ENCODE measurements at regions of chr10 and their contacts with region 1.

Region 1: GRCh38 chr10:69890065-69890847 is 88.5 kb downstream of the COL13A1 start:
- H3K4me3 ChIP-seq: no peak overlapping the region
- H3K27ac ChIP-seq: no peak overlapping the region
- H3K4me1 ChIP-seq: no peaks in the 10 kb centered on the region
- CTCF ChIP-seq: no peak

Region 2: DNA sequence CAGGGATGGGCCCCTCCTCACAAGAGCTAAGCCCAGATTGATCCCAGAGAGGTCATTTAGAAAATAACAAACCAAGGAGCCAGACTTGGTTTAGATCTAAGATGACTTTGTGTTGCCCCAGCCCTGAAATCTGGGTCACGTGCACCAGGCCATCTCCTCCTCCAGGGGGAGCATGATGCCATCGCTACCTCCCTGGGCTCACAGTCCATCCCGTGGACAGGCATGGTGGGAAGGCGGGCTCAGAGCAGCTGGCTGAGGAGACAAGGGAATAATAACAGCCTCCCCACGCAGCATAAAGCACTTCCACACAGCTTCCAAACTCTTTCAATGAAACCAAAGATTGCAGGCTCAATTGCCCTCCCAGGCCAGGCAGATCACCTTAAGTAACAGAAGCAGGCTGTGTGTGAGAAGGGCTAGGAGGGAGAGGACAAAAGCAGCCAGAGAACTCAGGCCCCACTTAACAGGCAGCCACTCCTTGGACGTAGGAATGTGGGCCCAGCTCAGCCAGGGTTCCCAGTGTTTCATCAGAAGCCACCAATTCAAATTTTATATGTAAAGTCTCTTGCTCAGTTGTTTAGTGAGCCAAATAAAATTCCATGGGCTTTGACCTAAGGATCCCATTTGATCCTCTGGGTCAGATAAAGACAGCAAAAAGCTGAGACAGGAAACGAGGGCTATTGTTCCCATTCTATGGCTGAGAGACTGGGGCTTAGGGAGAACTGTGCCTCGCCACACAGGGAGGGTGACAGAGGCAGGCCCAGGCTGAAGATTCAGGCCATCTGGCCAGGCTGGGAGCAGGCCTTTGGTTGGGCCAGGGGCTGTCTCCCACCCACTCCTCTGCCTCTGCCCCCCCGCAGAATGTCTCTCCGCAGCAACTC is 11.6 kb after region 1 on chr10:
- CTCF ChIA-PET with region 1: interaction called, 13 read pairs
- POLR2A ChIA-PET with region 1: no interaction called
- H3K4me3 ChIP-seq: no peak overlapping the region
- H3K27ac ChIP-seq: no peak overlapping the region
- H3K4me1 ChIP-seq: no peaks in the 10 kb centered on the region
- CTCF ChIP-seq: peak; percentile 76

Measured in HEK293 (cell line).